ENCODE measurements at regions of chr2 and their contacts with region 1.

Region 1: GRCh38 chr2:23824777-23825212 is 102.1 kb downstream of the ATAD2B start:
- DNase-seq: peak; percentile 36
- ATAC-seq: peak; percentile 72
- H3K4me3 ChIP-seq: no peak overlapping the region
- H3K27ac ChIP-seq: no peak overlapping the region
- H3K4me1 ChIP-seq: no peaks in the 10 kb centered on the region; a peak in 1 of 4 replicates
- H3K27me3 ChIP-seq: no peaks in the 10 kb centered on the region
- CTCF ChIP-seq: peak; percentile 58 to 81 (median 81)
- POLR2A ChIP-seq: no peak
- RAD21 ChIP-seq: peak; percentile 77

Region 2: GRCh38 chr2:23745726-23746105 is 79.1 kb before region 1 on chr2:
- CTCF ChIA-PET with region 1: no interaction called
- POLR2A ChIA-PET with region 1: no interaction called
- RAD21 ChIA-PET with region 1: no interaction called
- intact Hi-C with region 1: no loop called
- DNase-seq: no peak
- ATAC-seq: no peak
- H3K4me3 ChIP-seq: no peak overlapping the region
- H3K27ac ChIP-seq: no peak overlapping the region
- H3K4me1 ChIP-seq: no peaks in the 10 kb centered on the region
- H3K27me3 ChIP-seq: no peaks in the 10 kb centered on the region
- CTCF ChIP-seq: no peak
- POLR2A ChIP-seq: no peak
- RAD21 ChIP-seq: no peak

Region 3: GRCh38 chr2:23760736-23761135 is 64.1 kb before region 1 on chr2:
- CTCF ChIA-PET with region 1: no interaction called
- POLR2A ChIA-PET with region 1: no interaction called
- RAD21 ChIA-PET with region 1: no interaction called
- intact Hi-C with region 1: no loop called
- DNase-seq: peak; percentile 18
- ATAC-seq: no peak
- H3K4me3 ChIP-seq: no peak overlapping the region
- H3K27ac ChIP-seq: no peak overlapping the region
- H3K4me1 ChIP-seq: peaks cover 0 to 10% of the 10 kb centered on the region in 2 experiments; a peak in 2 of 4 replicates
- H3K27me3 ChIP-seq: no peaks in the 10 kb centered on the region
- CTCF ChIP-seq: peak; percentile 10 to 45 (median 15); a peak in 2 of 6 replicates
- POLR2A ChIP-seq: no peak
- RAD21 ChIP-seq: peak; percentile 44

Region 4: DNA sequence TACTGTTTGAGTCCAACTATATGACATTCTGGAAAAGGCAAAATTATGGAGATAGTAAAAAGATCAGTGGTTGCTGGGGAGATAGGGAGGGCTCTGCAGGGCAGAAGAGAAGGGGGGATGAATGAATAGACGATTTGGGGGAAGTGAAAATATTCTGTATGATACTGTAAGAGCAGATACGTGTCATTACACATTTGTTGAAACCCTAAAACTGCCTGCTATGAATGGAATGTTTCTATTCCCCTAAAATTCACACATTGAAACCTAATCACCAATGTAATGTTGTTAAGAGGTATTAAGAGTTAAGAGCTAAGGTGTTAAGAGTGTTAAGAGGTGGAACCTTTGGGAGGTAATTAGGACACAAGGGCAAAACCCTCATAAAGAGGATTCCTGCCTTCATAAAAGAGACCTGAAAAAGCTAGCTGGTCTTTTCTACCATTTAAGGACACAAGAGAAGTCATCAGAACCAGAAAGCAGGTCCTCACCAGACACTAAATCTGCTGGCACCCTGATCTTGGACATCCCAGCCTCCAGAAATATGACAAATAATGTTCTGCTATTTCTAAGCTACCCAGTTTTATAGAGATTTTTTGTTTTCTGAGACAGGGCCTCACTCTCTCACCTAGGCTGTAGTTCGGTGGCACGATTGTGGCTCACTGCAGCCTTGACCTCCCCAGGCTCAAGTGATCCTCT is 25.9 kb after region 1 on chr2:
- CTCF ChIA-PET with region 1: interaction called, 17 read pairs
- POLR2A ChIA-PET with region 1: no interaction called
- RAD21 ChIA-PET with region 1: interaction called in 1 of 2 experiments, 4 read pairs
- intact Hi-C with region 1: no loop called
- DNase-seq: no peak
- ATAC-seq: no peak
- H3K4me3 ChIP-seq: no peak overlapping the region
- H3K27ac ChIP-seq: no peak overlapping the region
- H3K4me1 ChIP-seq: no peaks in the 10 kb centered on the region
- H3K27me3 ChIP-seq: no peaks in the 10 kb centered on the region
- CTCF ChIP-seq: no peak
- POLR2A ChIP-seq: no peak
- RAD21 ChIP-seq: no peak

Region 5: GRCh38 chr2:24058564-24059271 is 233.9 kb after region 1 on chr2:
- CTCF ChIA-PET with region 1: interaction called, 8 read pairs
- POLR2A ChIA-PET with region 1: no interaction called
- RAD21 ChIA-PET with region 1: no interaction called
- intact Hi-C with region 1: loop called (anchors 1 kb)
- DNase-seq: no peak
- ATAC-seq: no peak
- H3K4me3 ChIP-seq: no peak overlapping the region
- H3K27ac ChIP-seq: no peak overlapping the region
- H3K4me1 ChIP-seq: no peaks in the 10 kb centered on the region
- H3K27me3 ChIP-seq: no peaks in the 10 kb centered on the region
- CTCF ChIP-seq: no peak
- POLR2A ChIP-seq: no peak
- RAD21 ChIP-seq: no peak

Region 6: DNA sequence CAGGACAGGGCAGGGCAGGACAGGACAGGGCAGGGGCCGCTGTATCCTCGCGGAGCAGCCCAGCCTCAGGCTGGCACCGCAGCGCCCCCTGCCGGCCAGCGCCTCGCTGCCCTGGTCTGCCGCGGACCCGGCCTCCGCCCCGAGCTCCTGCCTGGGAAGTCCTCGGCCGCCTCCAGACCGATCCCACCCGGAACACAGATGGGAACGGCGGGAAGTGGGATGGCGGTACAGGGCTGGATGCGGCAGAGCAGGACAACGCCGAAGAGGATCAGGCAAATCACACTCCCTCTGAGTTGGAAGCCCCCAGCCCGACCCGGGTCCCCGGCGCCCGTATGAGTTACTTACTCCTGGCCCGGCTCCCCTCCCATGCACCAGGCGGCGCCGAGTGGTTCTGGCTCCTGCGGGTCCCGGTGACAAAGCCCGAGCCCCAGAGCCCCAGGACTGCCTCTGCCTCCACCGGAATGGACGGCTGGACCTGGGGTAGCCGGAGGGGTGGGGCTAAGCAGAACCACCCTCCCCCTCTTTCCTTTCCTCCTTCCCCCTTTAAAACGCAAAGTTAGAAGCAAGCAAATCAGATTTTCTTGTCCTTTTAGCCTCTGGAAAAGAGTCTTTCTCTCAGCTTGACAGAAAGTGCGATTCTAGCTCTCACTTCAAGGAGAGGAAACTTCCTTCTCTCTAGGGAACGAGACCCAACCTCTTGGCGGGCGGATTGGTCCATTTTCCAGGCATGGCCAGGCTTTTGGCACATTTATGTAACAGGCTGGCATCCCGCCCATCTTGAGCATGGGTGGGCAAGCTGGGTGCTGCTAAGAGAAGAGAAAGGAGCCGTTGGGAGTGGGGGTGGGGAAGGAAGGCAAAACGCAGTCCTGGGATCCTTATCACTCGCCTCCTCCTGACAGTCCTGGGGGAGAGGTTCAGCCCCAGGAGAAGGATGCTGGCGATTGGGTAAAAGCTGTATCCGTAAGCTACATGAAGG is 259.9 kb after region 1 on chr2 and contains the start of gene TP53I3:
- CTCF ChIA-PET with region 1: interaction called, 26 read pairs
- POLR2A ChIA-PET with region 1: interaction called, 6 read pairs
- RAD21 ChIA-PET with region 1: no interaction called
- intact Hi-C with region 1: loop called (anchors 5 kb)
- DNase-seq: peak; percentile 74
- ATAC-seq: peak; percentile 91
- H3K4me3 ChIP-seq: peak within 1 kb of the TSS; percentile 71 to 72
- H3K27ac ChIP-seq: peak within 1 kb of the TSS; percentile 95
- H3K4me1 ChIP-seq: peaks cover 11 to 20% of the 10 kb centered on the region in 2 experiments
- H3K27me3 ChIP-seq: no peaks in the 10 kb centered on the region
- CTCF ChIP-seq: peak in 2 of 3 experiments; percentile 84 to 94; a peak in 4 of 6 replicates
- POLR2A ChIP-seq: peak; percentile 48
- RAD21 ChIP-seq: no peak
- total RNA-seq, gene TP53I3: 20.1 TPM

Region 7: GRCh38 chr2:24164125-24164973 is 339.6 kb after region 1 on chr2:
- CTCF ChIA-PET with region 1: interaction called, 5 read pairs
- POLR2A ChIA-PET with region 1: no interaction called
- RAD21 ChIA-PET with region 1: no interaction called
- intact Hi-C with region 1: loop called (anchors 5 kb)
- DNase-seq: peak; percentile 22
- ATAC-seq: peak; percentile 86
- H3K4me3 ChIP-seq: no peak overlapping the region
- H3K27ac ChIP-seq: no peak overlapping the region
- H3K4me1 ChIP-seq: no peaks in the 10 kb centered on the region
- H3K27me3 ChIP-seq: no peaks in the 10 kb centered on the region
- CTCF ChIP-seq: peak; percentile 90 to 99 (median 93)
- POLR2A ChIP-seq: no peak
- RAD21 ChIP-seq: peak; percentile 83

Region 8: GRCh38 chr2:24372033-24372432 is 547.2 kb after region 1 on chr2:
- CTCF ChIA-PET with region 1: no interaction called
- POLR2A ChIA-PET with region 1: no interaction called
- RAD21 ChIA-PET with region 1: no interaction called
- intact Hi-C with region 1: no loop called
- DNase-seq: no peak
- ATAC-seq: no peak
- H3K4me3 ChIP-seq: no peak overlapping the region
- H3K27ac ChIP-seq: no peak overlapping the region
- H3K4me1 ChIP-seq: no peaks in the 10 kb centered on the region
- H3K27me3 ChIP-seq: no peaks in the 10 kb centered on the region
- CTCF ChIP-seq: no peak
- POLR2A ChIP-seq: no peak
- RAD21 ChIP-seq: no peak

Region 9: DNA sequence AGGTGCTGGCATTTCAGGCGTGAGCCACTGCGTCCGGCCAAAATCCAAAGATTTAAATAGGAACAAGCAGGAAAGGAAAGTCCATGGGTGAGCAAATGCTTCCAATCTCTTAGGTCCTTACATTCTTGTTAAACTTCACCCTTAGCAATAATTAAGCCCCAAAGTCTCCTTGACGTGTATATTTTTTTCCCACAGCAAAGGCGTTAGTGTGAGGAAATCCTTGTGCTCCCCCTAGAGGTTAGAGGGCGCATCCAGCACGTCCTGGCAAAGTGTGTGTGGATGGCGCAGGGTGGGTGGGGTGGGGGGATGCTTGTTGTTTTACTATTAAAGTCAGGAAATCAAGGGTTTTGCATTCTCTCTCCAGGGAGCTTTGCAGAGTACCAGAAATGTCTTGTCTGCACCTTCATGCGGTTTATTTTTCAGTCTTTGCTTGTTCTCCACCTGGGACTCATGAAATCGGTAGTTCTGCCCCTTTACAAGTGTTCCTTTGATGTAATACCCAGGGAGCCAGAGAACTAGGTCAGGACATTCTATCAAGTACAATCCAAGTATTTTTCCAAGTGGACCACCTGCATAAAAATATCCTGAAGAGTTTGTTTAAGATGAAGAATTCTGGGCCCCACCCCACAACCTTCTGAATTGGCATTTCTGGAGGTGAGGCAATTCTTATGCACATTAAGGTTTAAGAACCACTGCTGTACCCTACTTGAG is 557.7 kb after region 1 on chr2:
- CTCF ChIA-PET with region 1: no interaction called
- POLR2A ChIA-PET with region 1: no interaction called
- RAD21 ChIA-PET with region 1: no interaction called
- intact Hi-C with region 1: loop called (anchors 10 kb)
- DNase-seq: peak; percentile 65
- ATAC-seq: peak; percentile 96
- H3K4me3 ChIP-seq: no peak overlapping the region; a peak in 1 of 4 replicates
- H3K27ac ChIP-seq: no peak overlapping the region
- H3K4me1 ChIP-seq: no peaks in the 10 kb centered on the region
- H3K27me3 ChIP-seq: no peaks in the 10 kb centered on the region
- CTCF ChIP-seq: peak; percentile 57 to 74 (median 67); a peak in 5 of 6 replicates
- POLR2A ChIP-seq: no peak
- RAD21 ChIP-seq: peak; percentile 82